PC-3 (cell line): ENCODE measurements at regions of chr19 and their contacts with region 1.

Region 1: GRCh38 chr19:41366089-41366488 is 2.1 kb upstream of the B9D2 start:
- DNase-seq: no peak
- ATAC-seq: no peak
- H3K4me3 ChIP-seq: no peak overlapping the region
- H3K27ac ChIP-seq: no peak overlapping the region
- H3K4me1 ChIP-seq: peaks cover 30% of the 10 kb centered on the region
- H3K27me3 ChIP-seq: no peaks in the 10 kb centered on the region
- CTCF ChIP-seq: no peak

Region 2: GRCh38 chr19:41328157-41328841 is 37.8 kb before region 1 on chr19:
- CTCF ChIA-PET with region 1: no interaction called
- POLR2A ChIA-PET with region 1: no interaction called
- intact Hi-C with region 1: no loop called
- DNase-seq: no peak
- ATAC-seq: peak; percentile 2; the same call in 1 of the 2 replicates
- H3K4me3 ChIP-seq: no peak overlapping the region
- H3K27ac ChIP-seq: peak overlapping the region; percentile 97
- H3K4me1 ChIP-seq: peaks cover 57% of the 10 kb centered on the region
- H3K27me3 ChIP-seq: no peaks in the 10 kb centered on the region
- CTCF ChIP-seq: no peak

Region 3: GRCh38 chr19:41341669-41342490 is 24.2 kb before region 1 on chr19:
- CTCF ChIA-PET with region 1: no interaction called
- POLR2A ChIA-PET with region 1: interaction called, 10 read pairs
- intact Hi-C with region 1: no loop called
- DNase-seq: no peak
- ATAC-seq: no peak
- H3K4me3 ChIP-seq: no peak overlapping the region
- H3K27ac ChIP-seq: no peak overlapping the region
- H3K4me1 ChIP-seq: no peaks in the 10 kb centered on the region
- H3K27me3 ChIP-seq: no peaks in the 10 kb centered on the region
- CTCF ChIP-seq: 0 out of 2 replicates have a peak, but pooled peaks have one; percentile 22

Region 4: GRCh38 chr19:42113641-42114348 is 747.7 kb after region 1 on chr19:
- CTCF ChIA-PET with region 1: no interaction called
- POLR2A ChIA-PET with region 1: interaction called, 32 read pairs
- intact Hi-C with region 1: no loop called
- DNase-seq: peak; percentile 92
- ATAC-seq: peak; percentile 94
- H3K4me3 ChIP-seq: no peak overlapping the region; the same call in 1 of the 2 replicates
- H3K27ac ChIP-seq: peak overlapping the region; percentile 94
- H3K4me1 ChIP-seq: peaks cover 35% of the 10 kb centered on the region
- H3K27me3 ChIP-seq: no peaks in the 10 kb centered on the region
- CTCF ChIP-seq: peak; percentile 45